ENCODE measurements at regions of chrX and their contacts with region 1.

Region 1: GRCh38 chrX:136646602-136647239 is 1.2 kb upstream of the CD40LG start:
- DNase-seq: peak in 12 of 14 experiments; percentile 14 to 78 (median 44)
- ATAC-seq: peak; percentile 81
- H3K4me3 ChIP-seq: no peak overlapping the region
- H3K4me3 Mint-ChIP-seq: peak overlapping the region; percentile 99
- H3K27ac ChIP-seq: peak overlapping the region; percentile 39 to 45
- H3K27ac Mint-ChIP-seq: peak overlapping the region; percentile 92
- H3K4me1 ChIP-seq: peaks cover 26% of the 10 kb centered on the region
- H3K4me1 Mint-ChIP-seq: peaks cover 54% of the 10 kb centered on the region
- H3K27me3 ChIP-seq: no peaks in the 10 kb centered on the region
- H3K27me3 Mint-ChIP-seq: no peaks in the 10 kb centered on the region
- CTCF ChIP-seq: no peak

Region 2: DNA sequence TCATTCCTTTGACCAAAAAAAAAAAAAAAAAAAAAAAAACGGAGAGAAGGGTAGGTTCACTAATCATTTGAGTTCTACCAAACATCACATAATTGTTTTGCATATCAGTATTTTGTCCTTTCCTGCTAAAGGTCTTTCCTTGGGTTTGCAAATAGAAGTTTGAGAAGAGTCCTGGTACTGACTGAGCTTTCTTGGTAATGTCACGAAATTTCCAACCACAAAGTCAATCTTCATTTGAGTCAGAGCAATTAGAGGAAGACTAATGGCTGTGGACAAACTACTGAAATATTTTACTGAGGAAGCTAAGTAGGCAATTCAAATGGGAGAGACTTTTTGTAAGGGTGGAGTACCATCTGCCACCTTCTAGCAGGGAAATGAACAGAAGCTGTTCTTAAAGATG is 20.5 kb before region 1 on chrX:
- CTCF ChIA-PET with region 1: no interaction called
- POLR2A ChIA-PET with region 1: interaction called, 70 read pairs
- intact Hi-C with region 1: no loop called
- DNase-seq: no peak
- ATAC-seq: no peak
- H3K4me3 ChIP-seq: no peak overlapping the region
- H3K4me3 Mint-ChIP-seq: peak overlapping the region; percentile 31
- H3K27ac ChIP-seq: peak overlapping the region in 1 of 2 donors; percentile 62
- H3K27ac Mint-ChIP-seq: peak overlapping the region; percentile 69
- H3K4me1 ChIP-seq: peaks cover 66% of the 10 kb centered on the region
- H3K4me1 Mint-ChIP-seq: peaks cover 98% of the 10 kb centered on the region
- H3K27me3 ChIP-seq: no peaks in the 10 kb centered on the region
- H3K27me3 Mint-ChIP-seq: no peaks in the 10 kb centered on the region
- CTCF ChIP-seq: no peak

Region 3: GRCh38 chrX:136635235-136635634 is 11.5 kb before region 1 on chrX:
- CTCF ChIA-PET with region 1: no interaction called
- POLR2A ChIA-PET with region 1: interaction called, 85 read pairs
- intact Hi-C with region 1: loop called in 1 of 2 experiments (anchors 1 kb)
- DNase-seq: peak in 4 of 14 experiments; percentile 28 to 76 (median 70)
- ATAC-seq: peak; percentile 80
- H3K4me3 ChIP-seq: peak overlapping the region; percentile 27
- H3K4me3 Mint-ChIP-seq: peak overlapping the region; percentile 58
- H3K27ac ChIP-seq: peak overlapping the region; percentile 39 to 47
- H3K27ac Mint-ChIP-seq: peak overlapping the region; percentile 88
- H3K4me1 ChIP-seq: peaks cover 83% of the 10 kb centered on the region
- H3K4me1 Mint-ChIP-seq: peaks cover 88% of the 10 kb centered on the region
- H3K27me3 ChIP-seq: no peaks in the 10 kb centered on the region
- H3K27me3 Mint-ChIP-seq: no peaks in the 10 kb centered on the region
- CTCF ChIP-seq: no peak

Region 4: DNA sequence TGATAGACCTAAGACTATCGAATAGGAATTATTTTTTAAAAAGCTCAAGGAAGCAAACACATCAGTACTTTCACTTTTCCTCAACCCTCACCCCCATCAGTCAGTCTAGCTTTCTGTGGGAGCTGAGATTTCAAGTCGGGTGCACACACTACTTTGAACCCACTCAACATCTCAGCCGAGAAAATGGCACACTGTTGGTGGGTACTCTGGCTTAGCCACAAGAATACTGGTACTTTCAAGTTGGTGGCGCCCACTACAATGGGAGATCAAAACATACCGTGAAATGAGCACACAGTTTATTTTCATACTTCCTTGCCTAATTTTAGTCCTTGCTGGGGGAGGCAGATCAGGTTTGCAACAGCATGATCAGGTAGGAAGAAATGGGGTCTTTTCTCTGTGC is 11.4 kb after region 1 on chrX:
- CTCF ChIA-PET with region 1: interaction called, 3 read pairs
- POLR2A ChIA-PET with region 1: interaction called, 42 read pairs
- intact Hi-C with region 1: loop called in 1 of 2 experiments (anchors 1 kb)
- DNase-seq: peak in 5 of 14 experiments; percentile 16 to 50 (median 45)
- ATAC-seq: peak; percentile 10
- H3K4me3 ChIP-seq: peak overlapping the region; percentile 36
- H3K4me3 Mint-ChIP-seq: peak overlapping the region; percentile 99
- H3K27ac ChIP-seq: peak overlapping the region; percentile 74 to 75
- H3K27ac Mint-ChIP-seq: peak overlapping the region; percentile 92
- H3K4me1 ChIP-seq: peaks cover 76% of the 10 kb centered on the region
- H3K4me1 Mint-ChIP-seq: peaks cover 98% of the 10 kb centered on the region
- H3K27me3 ChIP-seq: no peaks in the 10 kb centered on the region
- H3K27me3 Mint-ChIP-seq: no peaks in the 10 kb centered on the region
- CTCF ChIP-seq: no peak

Region 5: GRCh38 chrX:136665258-136665900 is 18.7 kb after region 1 on chrX:
- CTCF ChIA-PET with region 1: no interaction called
- POLR2A ChIA-PET with region 1: interaction called, 42 read pairs
- intact Hi-C with region 1: loop called in 1 of 2 experiments (anchors 2 kb)
- DNase-seq: no peak
- ATAC-seq: no peak
- H3K4me3 ChIP-seq: no peak overlapping the region
- H3K4me3 Mint-ChIP-seq: no peak overlapping the region
- H3K27ac ChIP-seq: no peak overlapping the region
- H3K27ac Mint-ChIP-seq: peak overlapping the region; percentile 83
- H3K4me1 ChIP-seq: peaks cover 82% of the 10 kb centered on the region
- H3K4me1 Mint-ChIP-seq: peaks cover 89% of the 10 kb centered on the region
- H3K27me3 ChIP-seq: no peaks in the 10 kb centered on the region
- H3K27me3 Mint-ChIP-seq: no peaks in the 10 kb centered on the region
- CTCF ChIP-seq: no peak